Activated T-helper 1 cell treated with anti-CD3 and anti-CD28 coated beads, Interleukin-12 subunit alpha, Interleukin-12 subunit beta, Interleukin-2, Interleukin-4 antibody, amounts not matched to agents 30 ng/mL and 10 ng/mL and 1 ng/mL, durations not matched to agents 14 hours and 24 hours and 36 hours (primary cell): ENCODE measurements at regions of chr1 and their contacts with region 1.

Region 1: GRCh38 chr1:91021686-91022517 is at the start of gene ZNF644:
- DNase-seq: peak; percentile 87
- H3K4me3 Mint-ChIP-seq: peak within 1 kb of the TSS; percentile 92
- H3K27ac Mint-ChIP-seq: peak within 1 kb of the TSS; percentile 99
- H3K4me1 Mint-ChIP-seq: peaks cover 48% of the 10 kb centered on the region
- H3K27me3 Mint-ChIP-seq: peaks cover 2% of the 10 kb centered on the region
- total RNA-seq, gene ZNF644: 60.4 and 68.7 TPM in 2 replicates

Region 2: DNA sequence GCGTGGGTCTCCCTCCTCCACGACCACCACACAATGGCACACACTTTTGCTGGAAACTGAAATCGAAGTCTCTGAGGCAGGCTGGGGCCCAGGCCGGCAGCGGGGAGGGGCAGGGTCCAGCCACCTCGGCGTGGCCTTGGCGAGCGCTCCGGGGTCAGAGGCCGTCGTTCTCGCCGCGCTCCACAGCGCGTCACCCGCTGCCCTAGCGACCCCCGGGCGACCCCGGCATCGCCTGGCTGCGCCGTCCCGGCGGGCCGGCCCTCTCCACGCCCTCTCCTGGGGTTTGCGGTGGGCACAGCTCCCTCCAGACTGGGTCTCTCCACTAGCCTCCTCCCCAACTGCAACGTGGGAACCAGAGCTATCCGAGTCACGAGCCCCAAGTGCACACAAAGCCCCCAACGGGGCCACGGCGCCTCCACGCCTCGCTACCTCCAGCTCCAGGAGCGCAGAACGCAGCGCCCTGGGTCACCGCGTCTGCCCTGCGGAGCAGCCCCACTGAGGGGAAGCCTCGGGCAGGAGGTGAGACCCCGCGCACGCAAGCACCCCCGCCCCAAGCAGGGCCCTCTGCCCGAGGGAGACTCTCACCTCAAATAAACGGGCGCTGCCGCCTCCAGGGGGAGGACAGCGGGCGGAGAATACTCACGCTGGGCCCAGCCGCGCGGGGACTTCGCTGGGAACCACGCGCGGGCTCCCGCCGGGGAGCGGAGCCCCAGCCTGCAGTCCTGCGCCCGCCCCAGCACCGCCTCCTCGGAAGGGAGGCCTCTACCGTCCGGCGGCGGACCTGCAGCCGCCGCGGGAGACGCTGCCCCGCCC is 170.8 kb before region 1 on chr1:
- intact Hi-C with region 1: loop called (anchors 1 kb)
- DNase-seq: peak; percentile 67
- H3K4me3 Mint-ChIP-seq: peak overlapping the region; percentile 79
- H3K27ac Mint-ChIP-seq: no peak overlapping the region
- H3K4me1 Mint-ChIP-seq: peaks cover 17% of the 10 kb centered on the region
- H3K27me3 Mint-ChIP-seq: peaks cover 60% of the 10 kb centered on the region

Region 3: GRCh38 chr1:90989990-90990389 is 31.9 kb before region 1 on chr1:
- intact Hi-C with region 1: no loop called
- DNase-seq: no peak
- H3K4me3 Mint-ChIP-seq: no peak overlapping the region
- H3K27ac Mint-ChIP-seq: no peak overlapping the region
- H3K4me1 Mint-ChIP-seq: peaks cover 37% of the 10 kb centered on the region
- H3K27me3 Mint-ChIP-seq: no peaks in the 10 kb centered on the region

Region 4: DNA sequence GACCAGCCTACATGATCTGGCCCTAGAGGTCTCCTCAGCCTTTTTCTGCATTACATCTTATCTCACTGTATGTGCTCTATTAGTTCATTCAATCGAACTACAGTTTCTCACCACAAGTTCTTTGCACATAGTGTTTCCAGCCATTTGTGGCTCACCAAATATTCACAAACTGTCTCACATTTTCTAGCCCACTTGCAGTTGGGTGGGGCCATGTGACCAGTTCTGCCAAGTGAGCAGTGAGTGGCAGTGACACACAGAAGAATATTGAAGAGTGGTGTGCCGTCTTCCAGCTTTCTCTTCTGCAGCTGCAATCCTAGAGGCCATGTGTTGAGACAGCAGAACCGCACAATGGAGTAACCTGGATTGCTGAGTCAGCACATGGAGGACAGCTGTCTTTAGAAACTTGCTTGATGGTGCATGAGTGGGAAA is 103.1 kb after region 1 on chr1:
- intact Hi-C with region 1: loop called (anchors 1 kb)
- DNase-seq: no peak
- H3K4me3 Mint-ChIP-seq: no peak overlapping the region
- H3K27ac Mint-ChIP-seq: peak overlapping the region; percentile 64
- H3K4me1 Mint-ChIP-seq: peaks cover 7% of the 10 kb centered on the region
- H3K27me3 Mint-ChIP-seq: no peaks in the 10 kb centered on the region

Region 5: GRCh38 chr1:91736715-91737615 is 715.1 kb after region 1 on chr1:
- intact Hi-C with region 1: no loop called
- DNase-seq: no peak
- H3K4me3 Mint-ChIP-seq: no peak overlapping the region
- H3K27ac Mint-ChIP-seq: no peak overlapping the region
- H3K4me1 Mint-ChIP-seq: peaks cover 35% of the 10 kb centered on the region
- H3K27me3 Mint-ChIP-seq: peaks cover 6% of the 10 kb centered on the region

Region 6: GRCh38 chr1:92298573-92299476 is 1276.9 kb after region 1 on chr1 and contains the starts of genes GLMN and RPAP2:
- intact Hi-C with region 1: loop called (anchors 5 kb)
- DNase-seq: peak; percentile 74
- H3K4me3 Mint-ChIP-seq: peak within 1 kb of the TSS; percentile 97
- H3K27ac Mint-ChIP-seq: peak within 1 kb of the TSS; percentile 99
- H3K4me1 Mint-ChIP-seq: peaks cover 40% of the 10 kb centered on the region
- H3K27me3 Mint-ChIP-seq: no peaks in the 10 kb centered on the region
- total RNA-seq, gene GLMN: 29.2 and 29.7 TPM in 2 replicates
- total RNA-seq, gene RPAP2: 42.0 and 44.8 TPM in 2 replicates